Mammary epithelial cell (primary cell): ENCODE measurements at regions of chr3 and their contacts with region 1.

Region 1: DNA sequence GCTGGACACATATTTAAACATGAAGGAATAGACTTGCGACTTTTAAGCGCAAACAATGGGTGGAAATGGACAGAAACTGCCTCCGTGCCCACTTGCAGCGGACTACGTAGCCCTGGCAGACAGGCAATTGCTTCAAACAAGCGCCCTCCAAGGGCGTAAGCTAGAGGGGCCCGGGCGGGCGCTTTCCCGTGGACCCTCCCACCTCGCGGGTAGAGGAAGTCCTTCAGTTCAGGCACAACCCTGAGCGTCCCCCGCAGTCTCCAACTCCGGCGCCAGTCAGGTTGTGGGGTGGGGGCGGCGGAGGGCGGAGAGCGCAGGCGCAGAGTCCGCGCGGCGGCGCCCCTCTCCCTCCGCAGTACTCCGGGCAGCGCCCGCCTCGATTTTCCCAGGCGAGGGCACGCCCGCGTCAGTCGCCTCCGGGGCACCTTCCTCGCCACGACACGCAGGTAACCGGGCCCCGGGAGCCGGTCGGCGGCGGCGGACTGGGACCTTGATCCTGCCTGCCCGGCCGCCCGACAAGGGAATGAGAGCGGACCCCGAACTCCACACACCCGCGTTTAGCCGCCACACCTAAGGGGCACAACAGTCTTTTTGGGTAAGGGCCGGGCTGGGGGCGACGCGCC is at the start of gene SLC35G2:
- DNase-seq: no peak
- H3K4me3 ChIP-seq: peak within 1 kb of the TSS; percentile 48 to 59 (median 58)
- H3K27ac ChIP-seq: peak within 1 kb of the TSS; percentile 36
- H3K4me1 ChIP-seq: peaks cover 19% of the 10 kb centered on the region
- H3K27me3 ChIP-seq: no peaks in the 10 kb centered on the region
- CTCF ChIP-seq: no peak
- total RNA-seq, gene SLC35G2: 3.9 to 6.0 TPM

Region 2: GRCh38 chr3:136545664-136546268 is 273.1 kb before region 1 on chr3:
- CTCF ChIA-PET with region 1: no interaction called
- dilution Hi-C with region 1: no loop called
- in situ Hi-C with region 1: no loop called
- intact Hi-C with region 1: loop called (anchors 5 kb)
- DNase-seq: no peak
- H3K4me3 ChIP-seq: no peak overlapping the region
- H3K27ac ChIP-seq: no peak overlapping the region
- H3K4me1 ChIP-seq: peaks cover 6% of the 10 kb centered on the region
- H3K27me3 ChIP-seq: no peaks in the 10 kb centered on the region
- CTCF ChIP-seq: peak in 1 of 2 donors; percentile 37